Lower leg skin (tissue), 4 donors: ENCODE measurements at regions of chr1 and their contacts with region 1.

Region 1: DNA sequence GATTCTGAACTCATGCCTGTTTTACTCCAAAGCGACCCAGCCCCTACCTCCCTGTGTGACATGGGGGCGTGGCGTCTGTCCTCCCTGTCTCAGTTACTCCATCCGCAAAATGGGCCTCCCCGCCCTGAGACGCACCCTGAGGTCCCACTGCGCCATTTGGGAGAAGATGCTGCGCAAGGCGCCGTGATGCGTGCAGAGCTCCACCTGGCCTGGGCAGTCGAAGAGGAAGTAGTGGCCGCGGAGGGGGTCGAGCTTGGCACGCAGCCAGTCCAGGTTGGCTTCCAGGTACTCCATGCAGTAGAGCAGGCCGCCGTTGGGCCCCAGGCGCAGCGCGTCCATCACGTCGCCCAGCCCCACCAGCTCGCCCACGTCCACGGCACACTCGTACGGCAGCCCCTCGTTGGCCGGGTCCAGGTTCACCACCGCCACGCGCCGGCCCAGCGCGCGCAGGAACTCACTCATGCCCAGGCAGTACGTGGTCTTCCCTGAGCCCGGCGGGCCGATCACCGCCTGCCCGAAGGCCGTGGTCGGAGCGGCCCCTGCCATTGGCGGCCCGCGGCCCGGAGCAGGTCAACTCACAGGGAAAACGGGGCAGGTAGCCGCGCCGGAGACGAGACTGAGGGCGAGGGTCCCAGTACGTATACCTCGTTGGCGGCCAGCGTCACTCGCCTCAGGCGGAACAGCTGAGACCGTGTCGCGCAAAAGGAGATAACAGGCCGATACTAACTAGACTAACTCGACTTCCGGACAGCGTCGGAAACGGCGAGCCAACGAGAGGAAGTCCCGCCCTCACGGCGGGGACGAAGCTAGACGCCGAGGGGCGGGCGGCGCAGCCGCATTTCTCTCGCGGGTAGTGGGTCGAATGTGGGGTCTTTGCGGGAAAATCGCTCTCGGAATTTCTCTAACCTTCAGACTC is at the start of gene GPN2:
- DNase-seq: peak; percentile 73 to 94
- H3K4me3 ChIP-seq: peak within 1 kb of the TSS; percentile 72
- CTCF ChIP-seq: no peak
- POLR2A ChIP-seq: no peak
- total RNA-seq, gene GPN2: 12.3 to 24.5 (median 16.4) TPM

Region 2: DNA sequence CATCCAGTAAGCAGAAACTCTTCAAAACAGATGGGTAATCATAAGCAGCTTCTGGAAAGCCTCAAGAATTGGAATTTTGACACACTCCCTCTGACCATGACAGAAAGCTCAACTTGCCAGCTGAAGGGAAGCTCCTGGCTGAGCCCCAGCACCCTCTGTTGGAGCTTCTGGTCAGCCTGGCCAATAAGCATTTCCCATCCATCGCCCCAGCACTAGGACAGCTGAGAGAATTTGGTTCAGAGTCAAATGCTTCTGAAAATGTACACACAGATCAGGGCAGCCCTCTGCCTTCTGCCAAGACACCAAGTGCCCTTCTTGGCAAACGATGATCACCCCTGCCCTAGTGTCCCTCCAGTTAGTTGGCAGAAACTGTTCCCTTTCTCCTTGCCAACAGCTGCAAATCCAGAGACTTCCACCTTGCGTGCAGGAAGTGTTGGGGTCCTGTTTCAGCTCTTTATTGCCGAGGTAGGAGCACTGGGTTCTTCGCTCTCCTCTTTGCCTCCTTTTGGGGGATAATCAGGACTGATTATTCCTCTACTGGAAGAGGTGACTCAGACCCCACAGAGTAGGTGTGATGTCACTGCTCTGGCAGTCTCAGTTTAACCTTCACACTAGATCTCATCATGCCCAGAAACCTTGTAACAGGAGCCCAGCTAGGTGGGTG is 90.2 kb before region 1 on chr1:
- intact Hi-C with region 1: loop called (anchors 5 kb)
- DNase-seq: no peak
- H3K4me3 ChIP-seq: no peak overlapping the region
- CTCF ChIP-seq: no peak
- POLR2A ChIP-seq: no peak

Region 3: GRCh38 chr1:26932531-26932930 is 42.7 kb after region 1 on chr1:
- intact Hi-C with region 1: no loop called
- DNase-seq: no peak
- H3K4me3 ChIP-seq: no peak overlapping the region
- CTCF ChIP-seq: no peak
- POLR2A ChIP-seq: no peak

Region 4: DNA sequence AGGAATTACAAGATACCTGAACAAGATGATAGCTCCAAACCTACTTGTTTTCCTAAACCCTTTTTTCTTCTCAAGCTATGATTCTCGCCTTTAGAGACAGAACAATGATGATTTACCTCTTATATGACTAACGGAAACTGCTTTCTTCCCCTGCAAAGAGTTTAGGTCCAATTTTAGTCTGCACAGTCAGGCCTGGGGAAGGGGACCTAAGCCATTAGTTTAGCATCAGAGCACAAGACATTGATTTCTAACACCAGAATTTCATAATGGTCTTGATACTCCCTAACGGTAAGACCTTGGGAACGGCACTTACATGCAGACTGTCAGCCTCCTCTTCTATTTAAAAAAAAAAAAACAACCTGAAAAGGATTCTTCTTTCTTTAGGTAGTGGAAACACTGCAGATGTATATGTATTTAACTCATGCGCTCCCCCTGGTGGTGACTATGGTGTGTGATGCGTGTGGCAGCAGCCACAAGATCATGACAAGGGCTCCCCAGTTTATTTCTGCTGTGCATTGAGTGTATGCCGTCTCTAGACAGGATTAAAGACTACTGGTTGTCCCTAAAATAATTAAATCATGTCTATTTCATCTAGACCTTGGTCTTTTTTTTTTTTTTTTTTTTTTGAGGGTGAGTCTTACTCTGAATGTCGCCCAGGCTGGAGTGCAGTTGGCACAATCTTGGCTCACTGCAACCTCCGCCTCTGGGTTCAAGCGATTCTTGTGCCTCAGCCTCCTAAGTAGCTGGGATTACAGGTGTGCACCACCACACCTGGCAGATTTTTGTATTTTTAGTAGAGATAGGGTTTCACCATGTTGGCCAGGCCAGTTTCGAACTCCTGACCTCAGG is 394.8 kb after region 1 on chr1:
- intact Hi-C with region 1: no loop called
- DNase-seq: peak; percentile 83 to 92
- H3K4me3 ChIP-seq: no peak overlapping the region
- CTCF ChIP-seq: peak in 1 of 3 donors; percentile 35
- POLR2A ChIP-seq: no peak